ENCODE measurements at regions of chr15 and their contacts with region 1.

Region 1: DNA sequence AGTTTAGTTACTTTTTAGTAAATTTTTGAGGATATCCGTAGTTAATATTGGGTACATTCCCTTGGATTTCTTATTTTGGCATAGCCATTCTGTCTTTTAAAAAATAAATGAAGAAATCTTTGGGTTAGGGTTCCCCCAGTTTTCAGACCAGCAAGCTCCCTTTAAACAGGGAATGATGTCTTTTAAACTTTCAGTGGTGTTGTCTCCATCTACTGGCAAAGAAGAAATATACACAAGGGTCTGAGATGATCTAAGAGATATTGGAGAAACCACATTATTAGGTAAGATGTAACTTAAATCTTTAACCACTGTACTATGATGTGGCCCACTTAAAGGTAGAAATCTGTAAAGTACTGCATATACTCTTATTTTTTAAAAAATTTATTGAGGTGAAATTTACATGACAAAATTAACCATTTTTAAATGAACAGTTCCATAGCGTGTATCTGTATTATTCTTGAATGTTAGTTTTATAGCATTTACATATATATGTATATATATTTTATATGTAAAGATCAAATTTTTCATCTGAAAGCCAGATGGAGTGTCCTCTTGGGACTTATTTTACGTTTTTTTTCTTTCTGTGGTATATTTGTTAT is 35.1 kb upstream of the EIF3J start:
- DNase-seq: peak; percentile 50
- H3K4me3 ChIP-seq: no peak overlapping the region
- H3K27ac ChIP-seq: no peak overlapping the region
- H3K4me1 ChIP-seq: no peaks in the 10 kb centered on the region
- H3K27me3 ChIP-seq: no peaks in the 10 kb centered on the region
- CTCF ChIP-seq: peak; percentile 20 to 41
- POLR2A ChIP-seq: no peak

Region 2: DNA sequence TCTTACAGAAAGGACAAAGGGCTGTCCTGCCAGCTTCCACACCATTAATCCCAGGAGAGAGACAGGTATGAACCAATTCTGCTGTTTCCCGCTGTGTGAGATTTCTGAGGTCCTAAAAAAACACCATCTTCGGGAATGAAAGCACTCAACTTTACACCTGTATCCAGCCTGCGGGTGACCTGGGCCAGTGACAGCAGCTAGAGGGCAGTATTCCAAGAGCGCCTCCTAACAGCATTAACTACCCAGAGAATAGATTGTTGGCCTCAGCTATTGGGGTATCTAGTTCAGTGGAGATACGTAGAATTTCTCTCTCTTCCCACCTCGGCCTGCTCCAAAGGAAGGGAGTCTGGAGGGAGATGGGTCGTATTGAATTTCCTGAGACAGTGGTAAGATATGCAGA is 619.9 kb before region 1 on chr15:
- CTCF ChIA-PET with region 1: interaction called, 23 read pairs
- POLR2A ChIA-PET with region 1: no interaction called
- dilution Hi-C with region 1: no loop called
- intact Hi-C with region 1: no loop called
- DNase-seq: peak; percentile 11
- H3K4me3 ChIP-seq: no peak overlapping the region
- H3K27ac ChIP-seq: no peak overlapping the region
- H3K4me1 ChIP-seq: no peaks in the 10 kb centered on the region
- H3K27me3 ChIP-seq: no peaks in the 10 kb centered on the region
- CTCF ChIP-seq: peak; percentile 33 to 50
- POLR2A ChIP-seq: no peak

Region 3: GRCh38 chr15:44215594-44215993 is 286.3 kb before region 1 on chr15:
- CTCF ChIA-PET with region 1: interaction called, 30 read pairs
- POLR2A ChIA-PET with region 1: no interaction called
- dilution Hi-C with region 1: no loop called
- intact Hi-C with region 1: loop called (anchors 5 kb)
- DNase-seq: peak; percentile 61
- H3K4me3 ChIP-seq: peak overlapping the region in 1 of 3 experiments; percentile 13
- H3K27ac ChIP-seq: no peak overlapping the region
- H3K4me1 ChIP-seq: peaks cover 14% of the 10 kb centered on the region
- H3K27me3 ChIP-seq: no peaks in the 10 kb centered on the region
- CTCF ChIP-seq: no peak
- POLR2A ChIP-seq: no peak

Region 4: GRCh38 chr15:44286814-44287452 is 214.9 kb before region 1 on chr15:
- CTCF ChIA-PET with region 1: interaction called, 24 read pairs
- POLR2A ChIA-PET with region 1: no interaction called
- dilution Hi-C with region 1: no loop called
- intact Hi-C with region 1: no loop called
- DNase-seq: peak; percentile 24
- H3K4me3 ChIP-seq: peak overlapping the region; percentile 81 to 97 (median 82)
- H3K27ac ChIP-seq: no peak overlapping the region
- H3K4me1 ChIP-seq: peaks cover 19% of the 10 kb centered on the region
- H3K27me3 ChIP-seq: no peaks in the 10 kb centered on the region
- CTCF ChIP-seq: no peak
- POLR2A ChIP-seq: no peak

Region 5: GRCh38 chr15:44308415-44308814 is 193.5 kb before region 1 on chr15:
- CTCF ChIA-PET with region 1: no interaction called
- POLR2A ChIA-PET with region 1: no interaction called
- dilution Hi-C with region 1: no loop called
- intact Hi-C with region 1: no loop called
- DNase-seq: no peak
- H3K4me3 ChIP-seq: no peak overlapping the region
- H3K27ac ChIP-seq: no peak overlapping the region
- H3K4me1 ChIP-seq: no peaks in the 10 kb centered on the region
- H3K27me3 ChIP-seq: no peaks in the 10 kb centered on the region
- CTCF ChIP-seq: no peak
- POLR2A ChIP-seq: no peak

Region 6: DNA sequence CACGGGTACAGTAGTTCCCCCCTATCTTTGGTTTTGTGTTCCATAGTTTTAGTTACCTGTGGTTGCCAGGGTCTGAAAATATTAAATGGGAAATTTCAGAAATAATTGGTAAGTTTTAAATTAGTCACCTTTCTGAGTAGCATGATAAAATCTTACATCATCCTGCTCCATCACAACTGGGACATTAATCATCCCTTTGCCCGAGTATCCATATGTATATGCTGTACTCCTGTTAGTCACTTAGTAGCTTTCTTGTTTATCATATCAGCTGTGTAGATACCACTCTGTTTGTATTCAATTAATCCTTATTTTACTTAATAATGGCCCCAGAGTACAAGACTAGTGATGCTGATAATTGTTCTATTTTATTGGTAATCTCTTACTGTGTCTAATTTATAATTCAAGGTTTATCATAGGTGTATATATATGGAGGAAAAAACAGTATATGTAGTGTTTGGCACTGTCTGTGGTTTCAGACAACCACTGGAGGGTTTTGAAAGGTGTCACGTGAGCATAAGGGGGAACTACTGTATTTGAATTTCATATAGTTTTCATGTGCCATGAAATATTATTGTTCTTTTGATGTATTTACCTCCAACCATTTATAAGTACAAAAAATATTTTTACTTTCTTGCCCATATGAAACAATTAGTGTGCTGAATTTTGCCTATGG is 33.0 kb before region 1 on chr15:
- CTCF ChIA-PET with region 1: interaction called, 13 read pairs
- POLR2A ChIA-PET with region 1: no interaction called
- dilution Hi-C with region 1: no loop called
- intact Hi-C with region 1: no loop called
- DNase-seq: peak; percentile 29
- H3K4me3 ChIP-seq: no peak overlapping the region
- H3K27ac ChIP-seq: no peak overlapping the region
- H3K4me1 ChIP-seq: no peaks in the 10 kb centered on the region
- H3K27me3 ChIP-seq: no peaks in the 10 kb centered on the region
- CTCF ChIP-seq: no peak
- POLR2A ChIP-seq: no peak

Region 7: GRCh38 chr15:44489464-44489863 is 12.4 kb before region 1 on chr15:
- CTCF ChIA-PET with region 1: interaction called, 39 read pairs
- POLR2A ChIA-PET with region 1: no interaction called
- dilution Hi-C with region 1: no loop called
- intact Hi-C with region 1: no loop called
- DNase-seq: peak; percentile 77
- H3K4me3 ChIP-seq: no peak overlapping the region
- H3K27ac ChIP-seq: peak overlapping the region; percentile 4
- H3K4me1 ChIP-seq: peaks cover 12% of the 10 kb centered on the region
- H3K27me3 ChIP-seq: no peaks in the 10 kb centered on the region
- CTCF ChIP-seq: no peak
- POLR2A ChIP-seq: no peak

Measured in endothelial cell of umbilical vein (primary cell).